ENCODE measurements at regions of chr18 and their contacts with region 1.

Region 1: DNA sequence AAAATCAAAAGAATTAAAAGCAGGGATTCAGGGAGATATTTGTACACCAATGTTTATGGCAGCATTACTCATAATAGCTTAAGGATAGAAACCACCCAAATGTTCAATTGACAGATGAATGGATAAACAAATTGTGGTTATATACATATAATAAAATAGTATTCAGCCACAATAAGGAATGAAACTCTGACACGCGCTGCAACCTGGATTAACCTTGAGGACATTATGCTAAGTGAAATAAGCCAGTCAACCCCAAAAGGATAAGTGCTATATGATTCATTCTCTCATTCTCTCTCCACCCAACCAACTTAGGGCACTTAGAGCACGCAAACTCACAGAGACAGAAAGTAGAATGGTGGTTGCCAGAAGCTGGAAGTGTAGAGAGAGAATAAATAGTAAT is 216.8 kb upstream of the SLC14A2 start:
- DNase-seq: no peak
- ATAC-seq: no peak
- H3K4me3 ChIP-seq: no peak overlapping the region
- H3K27ac ChIP-seq: no peak overlapping the region
- H3K4me1 ChIP-seq: no peaks in the 10 kb centered on the region
- H3K27me3 ChIP-seq: no peaks in the 10 kb centered on the region
- CTCF ChIP-seq: no peak
- POLR2A ChIP-seq: no peak

Region 2: GRCh38 chr18:43620936-43621335 is 1777.5 kb before region 1 on chr18:
- intact Hi-C with region 1: loop called (anchors 10 kb)
- DNase-seq: no peak
- ATAC-seq: peak; percentile 62
- H3K4me3 ChIP-seq: no peak overlapping the region
- H3K27ac ChIP-seq: no peak overlapping the region
- H3K4me1 ChIP-seq: no peaks in the 10 kb centered on the region
- H3K27me3 ChIP-seq: no peaks in the 10 kb centered on the region
- CTCF ChIP-seq: peak in 6 of 7 experiments; percentile 34 to 70 (median 58)
- POLR2A ChIP-seq: no peak